Upper lobe of right lung (tissue), 1 donor: ENCODE measurements at regions of chr17 and their contacts with region 1.

Region 1: GRCh38 chr17:22251498-22251897 is 559.2 kb downstream of the KCNJ18 start:
- DNase-seq: no peak
- ATAC-seq: no peak
- H3K4me3 ChIP-seq: no peak overlapping the region
- H3K27ac ChIP-seq: no peak overlapping the region
- H3K4me1 ChIP-seq: no peaks in the 10 kb centered on the region
- H3K27me3 ChIP-seq: no peaks in the 10 kb centered on the region
- CTCF ChIP-seq: no peak

Region 2: GRCh38 chr17:22310717-22311686 is 59.5 kb after region 1 on chr17:
- intact Hi-C with region 1: loop called (anchors 10 kb)
- DNase-seq: no peak
- ATAC-seq: no peak
- H3K4me3 ChIP-seq: no peak overlapping the region
- H3K27ac ChIP-seq: no peak overlapping the region
- H3K4me1 ChIP-seq: no peaks in the 10 kb centered on the region
- H3K27me3 ChIP-seq: no peaks in the 10 kb centered on the region
- CTCF ChIP-seq: no peak